ENCODE measurements at regions of chr11 and their contacts with region 1.

Region 1: GRCh38 chr11:103682318-103683184 is 353.9 kb upstream of the DDI1 start:
- DNase-seq: peak in 1 of 2 donors; percentile 66
- ATAC-seq: peak; percentile 95
- H3K4me3 ChIP-seq: no peak overlapping the region
- H3K27ac ChIP-seq: no peak overlapping the region
- H3K4me1 ChIP-seq: no peaks in the 10 kb centered on the region
- H3K27me3 ChIP-seq: no peaks in the 10 kb centered on the region

Region 2: GRCh38 chr11:103798026-103798425 is 115.5 kb after region 1 on chr11:
- intact Hi-C with region 1: loop called in 1 of 2 experiments (anchors 10 kb)
- DNase-seq: no peak
- ATAC-seq: no peak
- H3K4me3 ChIP-seq: no peak overlapping the region
- H3K27ac ChIP-seq: no peak overlapping the region
- H3K4me1 ChIP-seq: peaks cover 0 to 6% of the 10 kb centered on the region in 2 donors
- H3K27me3 ChIP-seq: no peaks in the 10 kb centered on the region

Region 3: GRCh38 chr11:103875855-103876510 is 193.4 kb after region 1 on chr11:
- intact Hi-C with region 1: loop called (anchors 10 kb)
- DNase-seq: no peak
- ATAC-seq: no peak
- H3K4me3 ChIP-seq: no peak overlapping the region
- H3K27ac ChIP-seq: no peak overlapping the region
- H3K4me1 ChIP-seq: peaks cover 4 to 6% of the 10 kb centered on the region in 2 donors
- H3K27me3 ChIP-seq: no peaks in the 10 kb centered on the region

Region 4: DNA sequence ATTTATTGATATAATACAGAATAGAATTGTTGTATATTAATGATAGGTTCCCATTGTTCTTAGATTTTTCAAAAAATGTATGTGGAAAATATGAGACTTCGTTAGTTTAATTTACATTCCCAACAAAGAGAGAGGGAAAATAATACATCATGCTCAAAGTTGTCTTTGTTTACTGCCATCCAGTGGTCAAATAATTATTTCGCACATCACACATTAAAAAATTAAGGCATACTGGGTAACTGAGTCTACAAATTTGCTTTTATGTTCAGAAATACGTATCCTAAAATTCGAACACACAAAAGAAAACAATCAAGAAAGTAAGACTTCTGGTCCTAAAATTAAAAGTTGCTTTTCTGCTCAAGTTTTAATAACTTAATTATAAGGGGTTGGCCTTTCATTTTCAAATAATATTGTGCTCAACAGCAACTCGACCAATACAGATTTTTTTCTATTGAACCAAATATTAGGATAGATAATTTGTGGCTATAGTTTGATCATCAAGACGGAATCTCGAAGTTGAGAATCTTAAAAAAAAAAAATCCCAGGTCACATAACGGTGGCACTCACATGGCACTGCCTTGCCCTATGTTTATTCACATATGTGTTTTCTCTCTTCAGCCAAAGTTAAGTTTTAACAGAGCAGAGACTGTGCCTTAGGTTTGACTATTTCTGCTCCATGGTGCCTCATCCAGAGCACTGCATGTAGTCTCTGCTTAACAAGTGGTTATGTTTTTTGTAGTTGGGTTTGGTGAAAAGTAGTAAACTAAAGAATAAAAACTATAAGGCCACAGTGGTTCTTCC is 469.1 kb after region 1 on chr11:
- intact Hi-C with region 1: loop called in 1 of 2 experiments (anchors 5 kb)
- DNase-seq: no peak
- ATAC-seq: no peak
- H3K4me3 ChIP-seq: no peak overlapping the region
- H3K27ac ChIP-seq: no peak overlapping the region
- H3K4me1 ChIP-seq: peaks cover 0 to 5% of the 10 kb centered on the region in 2 donors
- H3K27me3 ChIP-seq: no peaks in the 10 kb centered on the region

Region 5: DNA sequence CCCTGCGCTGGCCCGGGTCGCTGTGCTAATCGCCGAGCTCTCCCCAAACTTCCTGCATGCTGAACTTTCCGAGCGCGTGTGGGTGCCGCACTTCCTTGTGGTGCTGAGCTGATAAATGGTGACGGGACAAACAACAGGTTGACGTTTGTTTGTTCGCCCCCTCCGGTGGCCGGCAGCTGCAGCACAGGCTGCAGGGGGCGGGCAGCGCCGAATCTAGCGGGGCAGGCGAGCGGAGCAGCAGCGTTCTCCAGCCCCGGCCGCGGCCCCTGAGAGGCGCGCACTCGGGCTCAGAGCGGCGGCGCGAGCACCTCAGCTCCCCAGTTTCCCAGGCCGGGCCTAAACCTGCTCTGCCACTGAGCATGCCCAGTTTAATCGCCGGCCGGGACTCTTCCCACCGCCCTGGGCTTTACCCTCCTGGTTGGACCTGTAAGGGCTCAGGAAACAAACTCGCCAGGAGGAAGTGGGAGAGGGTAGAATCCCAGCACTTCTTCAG is 481.5 kb after region 1 on chr11 and contains the start of gene PDGFD:
- intact Hi-C with region 1: loop called in 1 of 2 experiments (anchors 10 kb)
- DNase-seq: peak; percentile 73 to 85
- ATAC-seq: peak; percentile 90
- H3K4me3 ChIP-seq: peak within 1 kb of the TSS; percentile 53 to 68
- H3K27ac ChIP-seq: peak within 1 kb of the TSS in 1 of 2 donors; percentile 15
- H3K4me1 ChIP-seq: no peaks in the 10 kb centered on the region
- H3K27me3 ChIP-seq: no peaks in the 10 kb centered on the region
- total RNA-seq, gene PDGFD: 47.7 to 66.5 TPM

Region 6: DNA sequence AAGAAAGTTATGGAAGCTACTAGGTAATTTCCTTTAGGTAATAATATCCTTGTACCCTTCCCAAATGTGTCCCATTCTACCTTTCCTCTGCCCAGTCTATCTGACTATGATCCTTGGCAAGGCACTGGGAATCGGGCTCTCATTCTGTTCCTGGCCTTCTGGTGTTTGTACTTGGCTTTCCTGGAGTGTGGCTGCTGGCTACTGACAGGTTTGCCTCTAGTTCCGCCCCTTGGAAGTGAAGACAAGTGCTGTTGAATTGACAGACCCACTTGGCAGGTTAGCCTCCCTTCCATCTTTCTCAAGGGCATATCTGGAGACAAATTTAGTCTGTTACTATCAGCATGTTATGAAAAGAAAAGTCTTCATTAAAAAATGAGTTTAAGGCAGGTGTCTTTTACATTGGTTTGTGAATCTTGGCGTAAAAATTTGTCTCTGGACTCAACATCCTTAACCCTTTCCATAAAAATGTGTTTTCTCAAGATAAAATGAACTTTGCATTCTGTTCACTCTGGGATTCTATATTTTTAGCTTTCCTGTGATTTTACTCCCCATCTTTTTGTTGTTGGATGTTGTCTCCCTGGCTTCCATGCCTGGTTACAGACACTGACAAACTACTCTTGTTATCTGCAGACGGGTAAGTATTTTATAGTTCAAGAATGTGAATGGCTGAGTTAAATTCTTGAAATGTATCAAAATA is 768.8 kb after region 1 on chr11:
- intact Hi-C with region 1: loop called in 1 of 2 experiments (anchors 5 kb)
- DNase-seq: no peak
- ATAC-seq: no peak
- H3K4me3 ChIP-seq: no peak overlapping the region
- H3K27ac ChIP-seq: peak overlapping the region in 1 of 2 donors; percentile 40
- H3K4me1 ChIP-seq: no peaks in the 10 kb centered on the region
- H3K27me3 ChIP-seq: no peaks in the 10 kb centered on the region

Measured in aorta (tissue), 5 donors.